OCI-LY7 (cell line): ENCODE measurements at regions of chr17 and their contacts with region 1.

Region 1: DNA sequence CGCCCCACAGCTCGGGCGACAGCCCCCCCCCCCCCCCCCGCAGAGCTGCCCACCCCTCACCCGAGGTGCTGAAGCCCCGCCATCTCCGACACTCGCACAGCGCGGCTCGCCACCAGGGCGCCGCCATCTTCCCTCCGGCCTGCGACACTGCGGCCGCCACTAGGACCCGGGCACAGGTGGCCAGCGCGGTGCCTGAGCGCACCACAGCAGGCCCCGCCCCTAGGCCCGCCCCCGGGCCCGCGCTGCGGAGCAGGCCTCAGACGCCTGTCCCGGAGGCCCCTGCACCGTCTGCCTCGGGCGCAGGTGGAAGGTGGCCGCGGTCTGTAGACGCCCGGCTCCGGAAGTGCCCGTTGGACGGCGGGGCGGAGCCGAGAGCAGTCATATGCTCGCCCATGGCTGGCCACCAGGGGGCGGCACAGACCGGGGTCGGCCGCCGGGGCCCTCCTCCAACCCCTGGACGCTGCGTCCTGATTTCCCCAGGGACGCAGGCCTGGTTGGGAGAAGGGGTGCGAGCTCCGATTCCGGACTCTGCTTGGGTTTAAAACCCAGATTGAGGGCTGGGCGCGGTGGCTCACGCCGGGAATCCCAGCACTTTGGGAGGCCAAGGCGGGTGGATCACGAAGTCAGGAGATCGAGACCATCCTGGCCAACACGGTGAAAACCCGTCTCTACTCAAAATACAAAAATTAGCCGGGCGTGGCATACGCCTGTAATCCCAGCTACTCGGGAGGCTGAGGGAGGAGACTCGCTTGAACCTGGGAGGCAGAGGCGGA is at the start of gene MRPL38:
- DNase-seq: peak; percentile 99
- H3K4me3 ChIP-seq: peak within 1 kb of the TSS; percentile 76
- H3K27ac ChIP-seq: peak within 1 kb of the TSS; percentile 38
- H3K4me1 ChIP-seq: peaks cover 37% of the 10 kb centered on the region
- CTCF ChIP-seq: peak; percentile 95
- total RNA-seq, gene MRPL38: 91.9 and 112 TPM in 2 replicates

Region 2: GRCh38 chr17:75927286-75927922 is 22.5 kb after region 1 on chr17:
- CTCF ChIA-PET with region 1: interaction called, 5 read pairs
- POLR2A ChIA-PET with region 1: interaction called, 3 read pairs
- intact Hi-C with region 1: loop called (anchors 1 kb)
- DNase-seq: peak; percentile 74
- H3K4me3 ChIP-seq: no peak overlapping the region
- H3K27ac ChIP-seq: no peak overlapping the region
- H3K4me1 ChIP-seq: no peaks in the 10 kb centered on the region
- CTCF ChIP-seq: peak; percentile 79

Region 3: DNA sequence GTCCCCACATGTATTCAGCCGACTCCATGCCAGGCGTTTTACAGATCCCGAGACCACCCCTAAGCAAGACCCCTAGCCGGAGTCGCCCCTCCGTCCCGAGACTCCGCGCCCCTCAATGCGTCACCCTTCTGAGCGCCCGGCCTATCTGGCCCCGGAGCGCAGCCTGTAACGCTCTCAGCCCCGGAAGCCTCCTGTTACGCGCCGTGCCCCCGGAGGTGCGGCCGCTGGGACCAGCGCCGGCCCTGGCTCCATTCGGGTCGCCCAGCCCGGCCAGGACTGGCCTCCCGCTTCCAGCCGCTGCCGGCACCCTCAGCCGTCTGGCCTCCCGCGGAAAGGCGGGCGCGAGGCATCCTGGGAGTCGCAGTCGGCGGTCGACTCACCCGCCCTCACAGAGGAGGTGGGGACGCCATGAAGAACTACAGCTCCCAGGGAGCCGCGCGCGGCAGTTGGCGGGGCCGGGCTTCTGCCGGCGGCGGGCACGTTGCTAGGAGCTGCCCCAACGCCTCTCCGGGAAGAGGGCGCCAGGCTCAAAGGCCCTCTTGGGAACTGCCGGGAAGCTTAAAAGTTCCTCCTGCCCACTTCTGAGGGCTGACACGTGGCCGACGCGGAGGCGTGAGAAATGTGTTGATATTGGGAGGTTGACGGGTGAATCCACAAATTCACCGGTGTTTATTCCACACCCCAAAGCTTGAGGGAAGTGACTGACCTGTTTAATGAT is 35.9 kb after region 1 on chr17 and contains the start of gene FBF1:
- CTCF ChIA-PET with region 1: interaction called, 5 read pairs
- POLR2A ChIA-PET with region 1: interaction called, 8 read pairs
- intact Hi-C with region 1: loop called (anchors 2 kb)
- DNase-seq: peak; percentile 95
- H3K4me3 ChIP-seq: peak within 1 kb of the TSS; percentile 82
- H3K27ac ChIP-seq: peak within 1 kb of the TSS; percentile 7
- H3K4me1 ChIP-seq: peaks cover 19% of the 10 kb centered on the region
- CTCF ChIP-seq: peak; percentile 40; the same call in 1 of the 2 replicates
- total RNA-seq, gene FBF1: 34.6 and 38.7 TPM in 2 replicates

Region 4: DNA sequence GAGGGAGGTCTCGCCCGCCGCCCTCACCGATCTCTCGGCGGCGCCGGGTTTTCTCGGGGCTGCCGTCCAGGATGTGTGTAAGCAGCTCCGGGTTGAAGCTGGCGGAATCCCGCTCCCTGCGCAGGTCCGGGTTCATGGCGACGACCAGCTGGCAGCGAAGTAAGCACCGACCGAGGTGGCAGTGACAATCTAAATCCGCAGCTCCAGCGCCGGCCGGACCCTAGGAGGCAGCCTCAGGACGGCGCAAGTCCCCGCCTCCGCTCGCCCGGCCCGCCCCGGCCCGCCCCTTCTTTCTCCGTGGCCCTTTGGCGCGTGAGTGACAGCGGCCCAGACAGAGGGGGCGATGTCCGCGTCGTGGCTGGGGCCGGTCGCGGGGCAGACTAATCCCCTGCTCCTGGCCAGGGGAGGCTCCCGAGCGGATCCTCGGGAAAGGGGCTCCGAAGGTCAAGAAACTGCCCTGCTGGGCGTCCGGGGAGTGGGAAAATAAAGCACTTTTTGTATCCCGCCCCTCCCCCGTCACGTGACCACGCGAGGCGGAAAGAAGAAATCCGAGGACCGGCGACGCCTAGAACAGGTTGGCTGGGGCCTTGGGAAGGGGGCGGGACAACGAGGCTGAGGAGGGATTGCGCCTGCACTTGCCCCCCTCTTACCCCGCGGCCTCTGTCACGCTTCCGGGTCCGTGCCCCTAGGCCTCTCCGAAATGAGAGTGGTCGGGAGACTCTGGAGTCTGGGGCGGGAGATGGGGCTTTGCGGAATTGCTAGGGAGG is 74.2 kb after region 1 on chr17 and contains the starts of genes ACOX1 and TEN1:
- CTCF ChIA-PET with region 1: no interaction called
- POLR2A ChIA-PET with region 1: interaction called, 17 read pairs
- intact Hi-C with region 1: loop called (anchors 1 kb)
- DNase-seq: peak; percentile 99
- H3K4me3 ChIP-seq: peak within 1 kb of the TSS; percentile 79
- H3K27ac ChIP-seq: peak within 1 kb of the TSS; percentile 69
- H3K4me1 ChIP-seq: peaks cover 52% of the 10 kb centered on the region
- CTCF ChIP-seq: peak; percentile 66
- total RNA-seq, gene ACOX1: 12.3 and 22.6 TPM in 2 replicates
- total RNA-seq, gene TEN1: 17.6 and 22.5 TPM in 2 replicates

Region 5: DNA sequence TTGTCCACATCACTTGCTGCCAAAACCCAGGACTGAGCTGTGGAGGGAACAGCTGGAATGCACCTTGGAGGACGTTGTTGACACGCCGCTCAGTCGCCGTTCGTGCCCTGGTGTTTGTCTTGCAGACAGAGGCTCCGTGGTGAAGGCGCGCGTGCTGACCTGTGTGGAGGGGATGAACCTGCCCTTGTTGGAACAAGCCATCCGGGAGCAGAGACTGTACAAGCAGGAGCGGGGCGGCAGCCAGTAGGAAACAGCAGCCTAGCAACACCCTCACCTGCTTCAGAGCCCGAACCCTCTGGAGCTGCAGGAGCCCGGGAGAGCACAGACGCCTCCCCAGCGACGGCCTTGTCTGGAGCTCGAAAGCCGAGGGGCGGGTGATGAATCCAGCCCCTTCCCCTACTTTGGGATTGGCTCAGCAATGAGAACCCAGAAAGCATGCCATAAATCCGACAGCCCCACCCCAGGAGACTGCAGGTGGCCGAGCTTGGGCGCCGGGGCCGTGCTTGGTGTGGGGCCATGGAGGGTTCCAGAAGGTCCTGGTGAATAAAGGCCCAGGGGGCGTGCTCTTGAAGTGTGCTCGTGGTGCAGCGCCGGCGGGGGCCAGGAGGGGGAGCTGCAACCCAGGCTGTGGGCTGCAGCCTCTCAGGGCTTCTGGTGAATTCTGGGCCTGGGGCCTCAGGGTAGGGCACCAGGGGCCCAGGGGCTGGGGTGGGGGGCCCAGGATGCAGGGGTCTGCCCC is 95.2 kb after region 1 on chr17:
- CTCF ChIA-PET with region 1: interaction called, 8 read pairs
- POLR2A ChIA-PET with region 1: interaction called, 7 read pairs
- intact Hi-C with region 1: loop called (anchors 1 kb)
- DNase-seq: peak; percentile 83
- H3K4me3 ChIP-seq: no peak overlapping the region
- H3K27ac ChIP-seq: no peak overlapping the region
- H3K4me1 ChIP-seq: peaks cover 19% of the 10 kb centered on the region
- CTCF ChIP-seq: peak; percentile 99

Region 6: DNA sequence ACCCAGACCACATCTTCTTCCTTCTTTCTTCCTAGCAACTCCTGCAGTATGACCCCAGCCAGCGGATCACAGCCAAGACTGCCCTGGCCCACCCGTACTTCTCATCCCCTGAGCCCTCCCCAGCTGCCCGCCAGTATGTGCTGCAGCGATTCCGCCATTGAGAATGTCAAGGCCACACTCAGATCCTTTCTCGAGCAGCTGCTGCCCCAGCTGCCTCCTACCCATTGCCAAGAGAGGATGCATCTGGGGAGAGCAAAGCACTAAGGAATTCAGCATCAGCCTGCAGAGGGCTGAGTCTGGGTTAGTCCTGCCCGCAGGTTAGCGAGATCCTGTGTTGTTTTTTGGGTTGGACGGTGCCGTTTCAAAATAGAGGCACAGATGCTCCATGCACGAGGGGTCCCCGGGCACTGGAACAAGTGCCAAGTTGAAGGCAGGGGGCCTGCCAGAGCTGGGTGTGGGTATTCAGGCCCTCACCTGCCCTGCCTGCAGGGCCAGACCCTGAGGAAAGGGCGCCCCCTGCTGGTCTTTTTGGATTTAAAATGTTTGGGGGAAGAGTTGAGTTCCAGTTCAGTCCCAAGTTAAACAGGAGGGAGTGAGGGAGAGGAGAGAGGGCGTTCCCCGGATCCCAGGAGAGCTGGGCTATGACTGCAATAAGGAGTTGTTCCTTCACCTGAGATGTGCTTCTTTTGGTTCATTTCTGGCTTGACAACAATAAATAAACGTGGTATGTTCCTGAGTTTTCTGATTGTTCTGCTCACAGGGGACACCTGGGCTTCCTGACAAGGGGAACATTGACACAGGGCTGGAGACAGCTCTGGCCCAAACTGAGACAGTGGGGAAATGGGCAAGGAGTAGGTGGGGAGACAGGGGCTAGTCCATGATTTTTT is 100.6 kb after region 1 on chr17:
- CTCF ChIA-PET with region 1: interaction called, 8 read pairs
- POLR2A ChIA-PET with region 1: interaction called, 7 read pairs
- intact Hi-C with region 1: loop called (anchors 1 kb)
- DNase-seq: peak; percentile 89
- H3K4me3 ChIP-seq: no peak overlapping the region
- H3K27ac ChIP-seq: no peak overlapping the region
- H3K4me1 ChIP-seq: peaks cover 3% of the 10 kb centered on the region
- CTCF ChIP-seq: peak; percentile 99

Region 7: GRCh38 chr17:76103274-76104139 is 198.6 kb after region 1 on chr17 and contains the start of gene EXOC7:
- CTCF ChIA-PET with region 1: no interaction called
- POLR2A ChIA-PET with region 1: no interaction called
- intact Hi-C with region 1: loop called (anchors 10 kb)
- DNase-seq: peak; percentile 99
- H3K4me3 ChIP-seq: peak within 1 kb of the TSS; percentile 79
- H3K27ac ChIP-seq: peak within 1 kb of the TSS; percentile 32
- H3K4me1 ChIP-seq: peaks cover 29% of the 10 kb centered on the region
- CTCF ChIP-seq: no peak
- total RNA-seq, gene EXOC7: 118 and 122 TPM in 2 replicates